ENCODE measurements at regions of chr3 and their contacts with region 1.

Region 1: GRCh38 chr3:52001443-52001974 is 5.8 kb upstream of the RPL29 start:
- DNase-seq: peak; percentile 80 to 93
- H3K4me3 ChIP-seq: no peak overlapping the region
- H3K27ac ChIP-seq: no peak overlapping the region
- H3K4me1 ChIP-seq: peaks cover 20 to 25% (median 23%) of the 10 kb centered on the region in 4 donors
- H3K27me3 ChIP-seq: peaks cover 0 to 7% (median 0%) of the 10 kb centered on the region in 3 donors
- CTCF ChIP-seq: peak in 5 of 7 experiments; percentile 67 to 95 (median 90)
- EP300 ChIP-seq: no peak
- POLR2A ChIP-seq: no peak

Region 2: DNA sequence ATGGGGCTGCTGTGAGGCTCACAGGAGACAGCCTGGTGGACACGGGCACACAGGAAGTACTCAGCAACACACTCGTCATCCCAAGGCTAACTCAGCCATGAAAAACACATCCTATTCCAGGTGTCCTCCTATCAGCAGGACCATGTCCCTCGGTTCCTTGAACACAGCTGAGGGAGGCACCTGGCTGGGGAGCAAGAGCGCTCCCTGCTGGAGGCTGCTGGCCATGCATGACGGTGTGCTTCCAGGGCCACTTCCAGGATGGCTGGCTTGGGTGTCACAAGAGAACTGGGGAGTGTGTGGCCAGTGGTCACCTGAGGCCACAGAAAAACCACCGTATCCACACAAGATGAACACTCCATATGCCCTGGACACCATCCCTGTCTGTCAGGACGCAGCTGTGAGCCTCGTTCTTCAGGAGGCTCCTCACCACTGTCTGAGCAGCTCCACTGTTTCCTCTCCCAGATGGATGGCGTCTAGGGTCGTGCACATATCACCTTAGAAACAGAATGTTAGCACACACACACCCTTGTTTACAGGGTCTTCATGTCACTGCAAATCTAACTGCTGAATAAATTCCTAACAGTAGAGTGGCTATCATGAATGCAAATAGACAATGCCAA is 121.7 kb after region 1 on chr3:
- intact Hi-C with region 1: loop called (anchors 5 kb)
- DNase-seq: peak; percentile 78 to 92
- H3K4me3 ChIP-seq: no peak overlapping the region
- H3K27ac ChIP-seq: peak overlapping the region in 2 of 5 donors; percentile 5 to 53
- H3K4me1 ChIP-seq: peaks cover 0 to 28% (median 13%) of the 10 kb centered on the region in 4 donors
- H3K27me3 ChIP-seq: no peaks in the 10 kb centered on the region
- CTCF ChIP-seq: peak in 6 of 7 experiments; percentile 60 to 93 (median 90)
- EP300 ChIP-seq: no peak
- POLR2A ChIP-seq: no peak

Region 3: DNA sequence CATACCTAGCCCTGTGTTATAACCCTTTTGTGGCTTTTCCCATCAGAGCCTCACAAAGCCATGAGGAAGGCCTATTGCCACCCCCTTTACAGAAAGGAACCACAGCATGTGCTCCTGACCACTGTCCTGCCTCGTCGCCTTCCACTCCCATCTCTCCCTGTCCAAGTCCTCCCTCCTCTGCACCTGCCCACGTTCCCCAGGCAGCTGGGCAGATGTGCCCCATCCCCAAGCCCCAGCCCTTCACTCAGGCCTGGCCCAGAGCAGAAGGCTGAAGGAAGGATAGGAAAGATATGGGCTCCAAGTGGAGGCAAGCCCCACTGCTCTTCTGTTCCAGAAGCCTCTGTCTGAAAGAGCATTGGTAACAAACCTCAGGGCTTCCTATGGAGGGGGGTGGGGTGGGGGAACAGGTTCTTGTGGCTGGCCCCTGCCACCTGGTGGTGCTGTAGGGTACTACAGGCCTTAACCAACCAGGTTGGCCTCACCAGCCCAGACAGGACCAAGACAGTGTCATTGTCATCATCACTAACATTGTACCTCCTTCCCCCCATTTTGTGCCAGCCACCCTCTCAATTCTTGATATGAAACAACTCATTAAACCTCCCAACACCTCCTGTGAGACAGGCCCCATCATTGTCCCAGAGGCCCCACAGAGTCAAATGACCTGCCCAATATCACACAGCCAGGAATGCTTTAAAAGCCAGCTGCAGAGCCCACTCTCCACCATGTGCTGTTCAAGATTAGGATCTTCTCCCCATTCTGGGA is 142.7 kb after region 1 on chr3:
- intact Hi-C with region 1: loop called (anchors 5 kb)
- DNase-seq: peak; percentile 90 to 94
- H3K4me3 ChIP-seq: no peak overlapping the region
- H3K27ac ChIP-seq: no peak overlapping the region
- H3K4me1 ChIP-seq: peaks cover 0 to 5% (median 2%) of the 10 kb centered on the region in 4 donors
- H3K27me3 ChIP-seq: no peaks in the 10 kb centered on the region
- CTCF ChIP-seq: peak in 6 of 7 experiments; percentile 95 to 99 (median 98)
- EP300 ChIP-seq: no peak
- POLR2A ChIP-seq: no peak